Activated CD4-positive, alpha-beta memory T cell treated with anti-CD3 and anti-CD28 coated beads for 36 hours (primary cell): ENCODE measurements at regions of chr17 and their contacts with region 1.

Region 1: GRCh38 chr17:55348749-55349354 is 72.8 kb downstream of the MMD start:
- DNase-seq: peak; percentile 58
- H3K4me3 Mint-ChIP-seq: no peak overlapping the region
- H3K27ac Mint-ChIP-seq: no peak overlapping the region
- H3K4me1 Mint-ChIP-seq: peaks cover 33% of the 10 kb centered on the region
- H3K27me3 Mint-ChIP-seq: peaks cover 2% of the 10 kb centered on the region

Region 2: GRCh38 chr17:55259684-55260111 is 89.2 kb before region 1 on chr17:
- CTCF ChIA-PET with region 1: no interaction called
- POLR2A ChIA-PET with region 1: no interaction called
- intact Hi-C with region 1: no loop called
- DNase-seq: no peak
- H3K4me3 Mint-ChIP-seq: no peak overlapping the region
- H3K27ac Mint-ChIP-seq: no peak overlapping the region
- H3K4me1 Mint-ChIP-seq: peaks cover 15% of the 10 kb centered on the region
- H3K27me3 Mint-ChIP-seq: peaks cover 30% of the 10 kb centered on the region

Region 3: DNA sequence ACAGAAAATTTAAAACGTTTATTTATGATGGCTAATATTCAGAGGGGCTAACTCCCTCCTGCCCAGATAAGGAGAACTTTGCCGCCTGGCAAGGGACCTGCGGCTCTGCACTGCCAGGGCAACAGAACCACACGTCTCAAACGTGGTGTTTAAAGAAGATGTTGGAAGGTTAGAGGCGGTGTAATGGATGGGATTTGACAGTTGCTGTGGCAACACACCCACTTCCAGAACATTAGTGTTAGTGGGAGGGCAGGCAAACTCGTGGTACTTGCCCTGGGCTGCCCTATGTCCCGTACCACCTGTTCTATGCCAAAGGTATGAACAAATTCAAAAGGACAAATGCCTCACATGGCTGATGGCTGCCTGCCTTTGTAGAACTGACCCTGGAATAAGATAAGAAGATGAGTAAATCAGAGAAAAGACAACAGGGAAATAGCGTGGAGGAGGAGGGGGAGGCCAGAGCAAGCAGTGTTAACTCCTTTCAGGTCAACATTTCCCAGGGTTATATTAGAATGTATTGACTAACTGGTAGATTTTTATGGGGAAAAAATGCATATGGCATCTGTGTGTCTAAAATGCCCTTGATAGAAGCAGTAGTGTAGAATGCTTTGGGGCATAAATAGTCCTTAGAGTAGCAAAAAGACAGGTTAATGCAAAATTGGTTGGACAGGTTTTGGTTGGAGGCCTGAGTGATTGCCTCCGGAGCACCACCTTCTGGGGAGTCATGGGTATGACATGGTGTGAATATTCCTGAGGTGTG is 53.3 kb before region 1 on chr17:
- CTCF ChIA-PET with region 1: interaction called, 11 read pairs
- POLR2A ChIA-PET with region 1: no interaction called
- intact Hi-C with region 1: no loop called
- DNase-seq: peak; percentile 72
- H3K4me3 Mint-ChIP-seq: no peak overlapping the region
- H3K27ac Mint-ChIP-seq: no peak overlapping the region
- H3K4me1 Mint-ChIP-seq: peaks cover under 1% of the 10 kb centered on the region
- H3K27me3 Mint-ChIP-seq: no peaks in the 10 kb centered on the region

Region 4: GRCh38 chr17:55303701-55304145 is 45.1 kb before region 1 on chr17:
- CTCF ChIA-PET with region 1: interaction called, 56 read pairs
- POLR2A ChIA-PET with region 1: interaction called, 3 read pairs
- intact Hi-C with region 1: loop called (anchors 2 kb)
- DNase-seq: peak; percentile 25
- H3K4me3 Mint-ChIP-seq: no peak overlapping the region
- H3K27ac Mint-ChIP-seq: no peak overlapping the region
- H3K4me1 Mint-ChIP-seq: peaks cover 9% of the 10 kb centered on the region
- H3K27me3 Mint-ChIP-seq: peaks cover 2% of the 10 kb centered on the region

Region 5: GRCh38 chr17:55314784-55315491 is 33.9 kb before region 1 on chr17:
- CTCF ChIA-PET with region 1: interaction called, 15 read pairs
- POLR2A ChIA-PET with region 1: no interaction called
- intact Hi-C with region 1: loop called (anchors 1 kb)
- DNase-seq: peak; percentile 56
- H3K4me3 Mint-ChIP-seq: peak overlapping the region; percentile 18
- H3K27ac Mint-ChIP-seq: peak overlapping the region; percentile 77
- H3K4me1 Mint-ChIP-seq: peaks cover 21% of the 10 kb centered on the region
- H3K27me3 Mint-ChIP-seq: peaks cover 4% of the 10 kb centered on the region

Region 6: DNA sequence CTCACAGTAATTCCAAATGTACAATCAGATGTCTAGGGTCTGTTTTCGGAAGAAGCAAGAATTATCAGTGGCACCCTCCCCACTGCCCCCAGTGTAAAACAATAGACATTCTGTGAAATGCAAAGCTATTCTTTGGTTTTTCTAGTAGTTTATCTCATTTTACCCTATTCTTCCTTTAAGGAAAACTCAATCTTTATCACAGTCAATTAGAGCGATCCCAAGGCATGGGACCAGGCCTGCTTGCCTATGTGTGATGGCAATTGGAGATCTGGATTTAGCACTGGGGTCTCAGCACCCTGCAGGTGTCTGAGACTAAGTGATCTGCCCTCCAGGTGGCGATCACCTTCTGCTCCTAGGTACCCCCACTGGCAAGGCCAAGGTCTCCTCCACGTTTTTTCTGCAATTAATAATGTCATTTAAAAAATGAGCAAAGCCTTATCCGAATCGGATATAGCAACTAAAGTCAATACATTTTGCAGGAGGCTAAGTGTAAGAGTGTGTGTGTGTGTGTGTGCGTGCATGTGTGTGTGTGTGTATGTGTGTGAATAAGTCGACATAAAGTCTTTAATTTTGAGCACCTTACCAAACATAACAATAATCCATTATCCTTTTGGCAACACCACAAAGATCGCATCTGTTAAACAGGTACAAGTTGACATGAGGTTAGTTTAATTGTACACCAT is 24.4 kb before region 1 on chr17:
- CTCF ChIA-PET with region 1: interaction called, 5 read pairs
- POLR2A ChIA-PET with region 1: no interaction called
- intact Hi-C with region 1: loop called (anchors 1 kb)
- DNase-seq: peak; percentile 17
- H3K4me3 Mint-ChIP-seq: no peak overlapping the region
- H3K27ac Mint-ChIP-seq: no peak overlapping the region
- H3K4me1 Mint-ChIP-seq: no peaks in the 10 kb centered on the region
- H3K27me3 Mint-ChIP-seq: no peaks in the 10 kb centered on the region

Region 7: DNA sequence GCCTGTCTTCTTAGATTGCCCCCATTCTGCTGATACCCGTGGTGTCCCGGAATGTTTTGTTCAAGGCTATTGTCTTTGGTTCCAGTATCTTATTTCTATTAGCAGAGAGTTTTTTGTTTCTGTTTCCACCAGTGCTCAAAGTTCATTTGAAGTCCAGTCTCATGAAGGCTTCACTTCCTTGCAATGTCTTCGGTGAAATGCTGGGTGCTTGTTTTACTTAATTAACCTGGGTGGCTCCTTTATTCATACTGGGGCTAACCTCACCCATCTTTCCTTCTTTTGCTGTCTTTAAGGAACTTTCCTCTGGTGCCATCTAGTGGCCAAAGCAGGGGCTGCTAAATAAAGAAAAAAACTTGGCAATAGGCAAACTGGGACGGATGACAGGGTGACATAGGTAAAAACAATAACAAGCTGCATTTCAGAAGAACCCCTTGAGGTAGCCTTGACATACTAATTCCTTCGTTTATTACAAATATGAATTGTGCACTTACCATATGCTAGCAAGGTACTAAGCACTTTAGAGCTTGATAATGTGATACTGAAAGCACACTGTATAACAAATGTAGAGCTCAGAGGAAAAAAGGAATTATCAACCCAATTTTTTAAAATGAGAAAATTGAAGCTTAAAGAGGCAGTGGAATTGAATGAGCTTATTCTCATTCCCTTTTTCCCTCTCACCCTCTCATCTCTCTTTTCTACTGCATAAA is 165.2 kb after region 1 on chr17:
- CTCF ChIA-PET with region 1: interaction called, 16 read pairs
- POLR2A ChIA-PET with region 1: no interaction called
- intact Hi-C with region 1: no loop called
- DNase-seq: peak; percentile 75
- H3K4me3 Mint-ChIP-seq: no peak overlapping the region
- H3K27ac Mint-ChIP-seq: no peak overlapping the region
- H3K4me1 Mint-ChIP-seq: no peaks in the 10 kb centered on the region
- H3K27me3 Mint-ChIP-seq: peaks cover 6% of the 10 kb centered on the region